Motor neuron (in vitro differentiated cells): ENCODE measurements at regions of chr2 and their contacts with region 1.

Region 1: GRCh38 chr2:73163483-73164367 is 38.6 kb upstream of the NOTO start:
- ATAC-seq: peak; percentile 72 to 99 (median 87)
- H3K4me3 ChIP-seq: no peak overlapping the region
- H3K27ac ChIP-seq: no peak overlapping the region
- H3K4me1 ChIP-seq: no peaks in the 10 kb centered on the region

Region 2: GRCh38 chr2:72864500-72864899 is 299.2 kb before region 1 on chr2:
- in situ Hi-C with region 1: no loop called
- ATAC-seq: peak in 1 of 8 experiments; percentile 8
- H3K4me3 ChIP-seq: no peak overlapping the region
- H3K27ac ChIP-seq: no peak overlapping the region
- H3K4me1 ChIP-seq: no peaks in the 10 kb centered on the region

Region 3: GRCh38 chr2:72887754-72888437 is 275.8 kb before region 1 on chr2:
- in situ Hi-C with region 1: loop called in 3 of 9 experiments (anchors 25 kb)
- ATAC-seq: peak; percentile 51 to 77 (median 72)
- H3K4me3 ChIP-seq: peak overlapping the region; percentile 32 to 45 (median 39)
- H3K27ac ChIP-seq: no peak overlapping the region
- H3K4me1 ChIP-seq: peaks cover 0 to 4% of the 10 kb centered on the region in 2 donors

Region 4: DNA sequence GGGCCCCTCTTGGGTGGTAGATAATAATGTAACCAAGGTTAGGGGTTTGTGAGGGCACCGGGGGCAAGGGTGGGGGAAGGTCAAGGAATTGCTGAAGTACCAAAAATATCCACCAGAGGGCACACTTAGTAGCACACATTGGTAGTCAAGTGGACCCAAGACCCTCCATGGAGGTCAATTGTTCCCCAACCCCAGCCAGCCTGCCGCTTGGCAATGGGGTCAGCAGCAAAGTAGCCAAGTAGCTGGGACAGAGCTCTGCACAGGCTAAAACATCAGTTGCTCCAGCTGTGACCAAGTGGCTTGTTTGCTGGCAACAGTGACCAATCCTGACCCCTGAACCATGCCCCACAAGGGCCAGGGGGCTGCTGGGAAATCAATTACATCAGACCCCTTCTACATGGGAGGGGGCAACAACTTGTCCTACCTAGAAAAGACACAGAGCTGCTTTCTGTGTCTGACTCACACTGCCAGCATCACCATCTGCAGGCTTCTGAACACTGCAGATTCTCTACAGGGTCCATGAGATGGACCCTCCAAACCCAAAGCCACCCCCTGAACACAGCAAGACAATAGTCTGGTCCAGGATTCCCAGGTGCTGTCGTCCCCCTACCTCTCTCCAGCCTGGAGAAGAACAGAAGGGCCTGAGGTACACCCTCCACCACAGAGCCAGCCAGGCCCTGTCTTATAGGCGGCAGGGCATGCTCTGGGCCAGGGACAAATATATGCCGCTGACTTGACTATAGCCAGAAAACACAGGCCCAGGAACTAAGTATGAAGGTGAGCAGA is 170.4 kb before region 1 on chr2:
- in situ Hi-C with region 1: loop called in 4 of 9 experiments (anchors 25 kb)
- ATAC-seq: peak in 7 of 8 experiments; percentile 35 to 80 (median 57)
- H3K4me3 ChIP-seq: no peak overlapping the region
- H3K27ac ChIP-seq: no peak overlapping the region
- H3K4me1 ChIP-seq: no peaks in the 10 kb centered on the region

Region 5: DNA sequence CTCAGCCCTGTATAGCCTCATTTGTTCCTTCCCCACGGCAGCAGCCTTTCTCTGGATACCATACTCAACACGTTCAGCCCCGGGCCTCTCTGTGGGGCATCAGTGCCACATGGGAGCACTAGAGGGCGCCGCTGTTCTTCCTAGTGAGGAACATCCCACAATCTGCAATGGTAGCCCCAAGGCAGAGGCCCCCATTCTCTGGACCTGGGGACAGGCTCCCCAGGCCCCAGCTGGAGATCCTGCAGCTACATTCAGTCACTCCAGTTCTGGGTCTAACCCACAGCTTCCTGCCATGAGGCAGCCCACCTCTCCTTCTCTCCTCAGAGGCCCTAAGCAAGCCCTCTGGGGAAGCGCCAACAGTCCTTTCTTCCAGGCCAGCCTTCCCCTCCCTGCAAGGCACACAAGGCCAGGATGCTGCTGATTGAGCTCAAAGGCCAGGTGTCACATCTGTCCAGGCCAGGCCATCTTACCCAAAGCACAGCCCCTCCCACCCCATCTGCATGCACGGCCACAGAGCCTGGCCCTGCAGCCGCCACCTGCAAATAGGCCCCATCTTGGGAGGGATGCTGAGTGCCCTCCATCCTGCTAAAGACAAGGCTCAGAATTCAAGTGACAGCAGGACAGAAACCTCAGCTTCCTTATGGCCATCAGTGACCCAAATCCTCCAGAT is 77.9 kb before region 1 on chr2:
- in situ Hi-C with region 1: loop called in 4 of 9 experiments (anchors 10 kb)
- ATAC-seq: peak; percentile 61 to 93 (median 70)
- H3K4me3 ChIP-seq: no peak overlapping the region
- H3K27ac ChIP-seq: no peak overlapping the region
- H3K4me1 ChIP-seq: peaks cover 0 to 12% of the 10 kb centered on the region in 2 donors

Region 6: DNA sequence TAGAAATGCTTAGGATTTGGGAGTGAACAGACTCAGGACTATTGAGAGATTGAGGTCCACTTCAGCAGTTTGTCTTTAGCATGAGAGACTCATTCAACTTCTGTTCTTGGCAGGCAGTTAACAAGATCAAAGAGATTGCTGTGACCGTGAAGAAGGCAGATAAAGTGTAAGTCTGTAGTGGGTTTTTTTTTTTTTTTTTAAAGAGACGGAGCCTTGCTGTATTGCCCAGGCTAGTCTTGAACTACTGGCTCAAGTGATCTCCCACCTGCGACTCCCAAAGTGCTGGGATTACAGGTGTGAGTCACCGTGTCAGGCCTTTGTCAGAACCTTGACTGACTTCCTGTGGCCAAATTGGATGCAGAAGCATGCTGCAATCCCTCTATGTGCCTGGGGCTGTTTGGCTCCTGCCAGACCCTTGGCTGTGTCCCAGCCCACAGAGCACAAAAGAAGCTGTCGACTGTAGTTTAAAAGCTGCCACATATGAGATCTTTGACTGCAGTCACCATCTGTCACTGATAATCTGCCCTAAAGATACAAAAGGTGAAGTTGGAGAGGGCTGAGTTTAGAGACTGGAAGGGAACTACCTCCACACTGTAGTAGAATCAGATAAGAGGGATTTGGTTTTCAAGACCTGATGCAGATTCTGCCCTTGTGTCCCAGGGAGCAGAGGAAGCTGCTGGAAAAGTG is 80.3 kb after region 1 on chr2:
- in situ Hi-C with region 1: no loop called
- ATAC-seq: peak in 3 of 8 experiments; percentile 82 to 97 (median 89)
- H3K4me3 ChIP-seq: no peak overlapping the region
- H3K27ac ChIP-seq: no peak overlapping the region
- H3K4me1 ChIP-seq: no peaks in the 10 kb centered on the region